ENCODE measurements at regions of chr4 and their contacts with region 1.

Region 1: GRCh38 chr4:107736924-107737448 is 17.0 kb upstream of the PAPSS1 start:
- DNase-seq: peak; percentile 59
- H3K4me3 Mint-ChIP-seq: no peak overlapping the region
- H3K27ac Mint-ChIP-seq: no peak overlapping the region
- H3K4me1 Mint-ChIP-seq: no peaks in the 10 kb centered on the region
- H3K27me3 Mint-ChIP-seq: peaks cover 10% of the 10 kb centered on the region
- CTCF ChIP-seq: peak; percentile 56

Region 2: DNA sequence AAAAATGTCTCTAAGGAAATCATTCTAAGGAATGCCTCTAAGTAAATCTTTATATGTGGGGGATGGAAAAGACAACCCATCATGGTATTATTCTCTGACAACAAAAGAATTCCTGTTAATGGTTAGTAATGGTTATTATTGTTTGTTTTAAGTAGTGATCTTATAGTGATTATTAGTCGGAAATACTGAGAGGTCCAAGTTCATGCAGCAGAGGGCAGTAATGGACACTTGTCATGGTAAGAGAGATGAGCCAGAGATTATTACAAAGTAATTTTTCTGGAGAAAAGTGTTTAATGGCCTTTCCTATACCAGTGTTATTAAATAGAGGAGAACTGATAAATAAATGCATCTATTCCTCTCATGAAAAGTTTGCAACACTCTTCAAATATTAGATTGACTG is 692.8 kb before region 1 on chr4:
- CTCF ChIA-PET with region 1: no interaction called
- intact Hi-C with region 1: loop called (anchors 10 kb)
- DNase-seq: no peak
- H3K4me3 Mint-ChIP-seq: no peak overlapping the region
- H3K27ac Mint-ChIP-seq: no peak overlapping the region
- H3K4me1 Mint-ChIP-seq: no peaks in the 10 kb centered on the region
- H3K27me3 Mint-ChIP-seq: no peaks in the 10 kb centered on the region
- CTCF ChIP-seq: no peak

Region 3: GRCh38 chr4:107552306-107552705 is 184.7 kb before region 1 on chr4:
- CTCF ChIA-PET with region 1: no interaction called
- intact Hi-C with region 1: loop called (anchors 10 kb)
- DNase-seq: no peak
- H3K4me3 Mint-ChIP-seq: no peak overlapping the region
- H3K27ac Mint-ChIP-seq: no peak overlapping the region
- H3K4me1 Mint-ChIP-seq: no peaks in the 10 kb centered on the region
- H3K27me3 Mint-ChIP-seq: no peaks in the 10 kb centered on the region
- CTCF ChIP-seq: no peak

Region 4: DNA sequence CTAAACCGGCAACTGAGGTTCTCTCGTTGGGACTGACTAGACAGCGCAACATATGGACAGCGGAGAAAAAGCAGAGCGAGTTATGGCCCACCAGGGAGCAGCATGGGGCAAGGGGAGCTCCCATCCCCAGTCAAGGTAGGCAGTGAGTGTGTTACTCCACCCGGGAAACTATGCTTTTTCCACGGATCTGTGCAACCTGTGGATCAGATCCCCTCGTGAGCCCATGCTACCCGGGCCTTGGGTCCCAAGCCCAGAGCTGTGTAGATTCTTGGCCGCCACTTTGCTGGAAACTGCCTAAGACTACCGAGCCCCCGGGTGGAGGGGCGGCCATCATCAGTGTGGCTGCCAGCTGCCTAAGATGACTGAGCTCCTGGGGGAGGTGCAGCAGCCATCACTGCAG is 157.9 kb before region 1 on chr4:
- CTCF ChIA-PET with region 1: no interaction called
- intact Hi-C with region 1: no loop called
- DNase-seq: no peak
- H3K4me3 Mint-ChIP-seq: no peak overlapping the region
- H3K27ac Mint-ChIP-seq: no peak overlapping the region
- H3K4me1 Mint-ChIP-seq: no peaks in the 10 kb centered on the region
- H3K27me3 Mint-ChIP-seq: peaks cover 10% of the 10 kb centered on the region
- CTCF ChIP-seq: no peak

Region 5: DNA sequence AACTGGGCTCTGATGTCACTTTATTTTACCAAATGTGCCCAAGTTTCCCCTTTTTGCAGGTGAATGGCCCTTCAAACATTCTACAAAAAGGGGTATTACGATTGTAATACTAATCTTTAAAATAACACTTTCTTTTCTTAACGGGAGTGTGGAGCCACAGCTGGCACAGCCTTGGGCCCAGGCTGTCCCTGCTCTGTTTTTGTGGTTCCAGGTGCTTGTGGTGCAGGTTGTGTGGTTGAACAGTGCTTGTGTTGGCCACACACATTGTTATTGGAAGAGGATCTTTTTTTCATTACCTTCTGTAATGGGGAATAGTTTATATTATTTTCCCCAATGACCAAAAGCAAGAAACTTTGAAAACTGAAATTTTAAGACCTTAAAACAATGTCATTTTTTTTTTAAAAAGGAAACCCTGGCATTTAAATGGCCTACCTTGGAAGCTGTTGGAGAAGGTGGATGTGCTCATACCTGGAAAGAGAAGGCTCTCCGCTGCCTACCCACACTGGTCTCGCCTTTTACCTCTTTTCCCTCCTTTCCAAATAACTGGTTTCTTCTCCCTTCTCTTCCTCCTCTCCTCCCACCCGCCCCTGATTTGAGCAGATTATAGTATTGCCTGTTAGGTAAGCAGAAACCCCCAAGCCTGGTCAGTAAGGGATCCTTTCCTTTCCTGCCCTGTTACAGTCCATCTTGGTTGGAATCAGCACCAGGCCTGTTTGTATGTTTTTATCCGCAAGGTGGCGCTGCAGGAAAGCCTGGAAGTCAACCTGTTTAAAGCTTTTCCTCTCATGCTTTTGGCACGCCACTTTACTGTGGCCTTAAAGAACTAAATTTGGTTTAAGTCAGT is 281.3 kb after region 1 on chr4:
- CTCF ChIA-PET with region 1: no interaction called
- intact Hi-C with region 1: no loop called
- DNase-seq: peak; percentile 69
- H3K4me3 Mint-ChIP-seq: no peak overlapping the region
- H3K27ac Mint-ChIP-seq: no peak overlapping the region
- H3K4me1 Mint-ChIP-seq: no peaks in the 10 kb centered on the region
- H3K27me3 Mint-ChIP-seq: no peaks in the 10 kb centered on the region
- CTCF ChIP-seq: peak; percentile 54

Measured in Calu3 (cell line).